MCF 10A (cell line): ENCODE measurements at regions of chr19 and their contacts with region 1.

Region 1: DNA sequence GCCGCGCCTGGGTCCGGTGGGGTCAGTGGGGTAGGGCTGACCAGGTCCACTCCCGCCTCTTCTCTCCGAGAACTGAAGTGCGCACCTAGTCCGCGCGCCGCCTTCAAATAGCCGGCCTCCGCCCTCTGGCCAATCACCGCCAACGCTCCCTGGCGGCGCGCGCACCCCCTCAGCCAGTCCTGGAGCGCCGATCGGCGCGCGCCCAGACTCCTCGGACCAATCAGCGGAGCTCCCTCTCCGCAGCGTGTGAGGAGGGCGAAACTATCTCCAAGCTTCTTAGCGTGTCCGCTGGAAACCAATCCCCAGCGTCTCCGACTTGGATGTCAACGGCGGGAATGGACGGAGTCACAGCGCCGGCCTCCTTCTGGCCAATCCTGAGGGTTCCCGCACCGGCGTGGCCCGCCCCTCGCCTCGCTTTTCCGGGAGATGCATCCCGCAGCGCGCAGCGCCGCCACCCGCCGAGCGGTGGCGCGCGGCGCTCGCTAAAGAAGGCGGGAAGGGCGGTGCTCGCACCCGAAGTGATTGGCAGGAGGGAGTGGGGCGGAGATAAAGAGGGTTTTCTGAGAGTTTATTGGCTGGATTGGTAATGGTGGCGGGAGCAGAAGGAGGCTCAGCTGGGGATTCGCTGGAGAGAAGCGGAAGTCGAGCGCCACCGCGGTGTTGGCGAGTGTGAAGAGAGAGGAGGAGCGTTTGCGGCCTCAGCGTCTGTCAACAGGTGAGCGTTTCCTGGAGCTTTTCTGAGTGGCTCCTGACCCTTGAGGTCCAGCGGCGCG is at the start of gene ASF1B:
- DNase-seq: peak; percentile 100
- H3K4me3 Mint-ChIP-seq: peak within 1 kb of the TSS; percentile 82
- H3K27ac Mint-ChIP-seq: peak within 1 kb of the TSS; percentile 91
- H3K4me1 Mint-ChIP-seq: peaks cover 30% of the 10 kb centered on the region
- H3K27me3 Mint-ChIP-seq: no peaks in the 10 kb centered on the region
- CTCF ChIP-seq: peak; percentile 74
- total RNA-seq, gene ASF1B: 6.5 and 7.0 TPM in 2 replicates

Region 2: GRCh38 chr19:14081325-14082093 is 55.2 kb before region 1 on chr19:
- CTCF ChIA-PET with region 1: interaction called, 4 read pairs
- POLR2A ChIA-PET with region 1: interaction called, 23 read pairs
- intact Hi-C with region 1: no loop called
- DNase-seq: peak; percentile 100
- H3K4me3 Mint-ChIP-seq: peak overlapping the region; percentile 90
- H3K27ac Mint-ChIP-seq: peak overlapping the region; percentile 96
- H3K4me1 Mint-ChIP-seq: no peaks in the 10 kb centered on the region
- H3K27me3 Mint-ChIP-seq: no peaks in the 10 kb centered on the region
- CTCF ChIP-seq: no peak

Region 3: GRCh38 chr19:14107581-14108461 is 28.9 kb before region 1 on chr19:
- CTCF ChIA-PET with region 1: no interaction called
- POLR2A ChIA-PET with region 1: no interaction called
- intact Hi-C with region 1: no loop called
- DNase-seq: no peak
- H3K4me3 Mint-ChIP-seq: no peak overlapping the region
- H3K27ac Mint-ChIP-seq: no peak overlapping the region
- H3K4me1 Mint-ChIP-seq: no peaks in the 10 kb centered on the region
- H3K27me3 Mint-ChIP-seq: no peaks in the 10 kb centered on the region
- CTCF ChIP-seq: no peak

Region 4: GRCh38 chr19:14122924-14123323 is 13.8 kb before region 1 on chr19:
- CTCF ChIA-PET with region 1: interaction called, 17 read pairs
- POLR2A ChIA-PET with region 1: interaction called, 22 read pairs
- intact Hi-C with region 1: no loop called
- DNase-seq: no peak
- H3K4me3 Mint-ChIP-seq: no peak overlapping the region
- H3K27ac Mint-ChIP-seq: no peak overlapping the region
- H3K4me1 Mint-ChIP-seq: peaks cover 11% of the 10 kb centered on the region
- H3K27me3 Mint-ChIP-seq: no peaks in the 10 kb centered on the region
- CTCF ChIP-seq: no peak

Region 5: DNA sequence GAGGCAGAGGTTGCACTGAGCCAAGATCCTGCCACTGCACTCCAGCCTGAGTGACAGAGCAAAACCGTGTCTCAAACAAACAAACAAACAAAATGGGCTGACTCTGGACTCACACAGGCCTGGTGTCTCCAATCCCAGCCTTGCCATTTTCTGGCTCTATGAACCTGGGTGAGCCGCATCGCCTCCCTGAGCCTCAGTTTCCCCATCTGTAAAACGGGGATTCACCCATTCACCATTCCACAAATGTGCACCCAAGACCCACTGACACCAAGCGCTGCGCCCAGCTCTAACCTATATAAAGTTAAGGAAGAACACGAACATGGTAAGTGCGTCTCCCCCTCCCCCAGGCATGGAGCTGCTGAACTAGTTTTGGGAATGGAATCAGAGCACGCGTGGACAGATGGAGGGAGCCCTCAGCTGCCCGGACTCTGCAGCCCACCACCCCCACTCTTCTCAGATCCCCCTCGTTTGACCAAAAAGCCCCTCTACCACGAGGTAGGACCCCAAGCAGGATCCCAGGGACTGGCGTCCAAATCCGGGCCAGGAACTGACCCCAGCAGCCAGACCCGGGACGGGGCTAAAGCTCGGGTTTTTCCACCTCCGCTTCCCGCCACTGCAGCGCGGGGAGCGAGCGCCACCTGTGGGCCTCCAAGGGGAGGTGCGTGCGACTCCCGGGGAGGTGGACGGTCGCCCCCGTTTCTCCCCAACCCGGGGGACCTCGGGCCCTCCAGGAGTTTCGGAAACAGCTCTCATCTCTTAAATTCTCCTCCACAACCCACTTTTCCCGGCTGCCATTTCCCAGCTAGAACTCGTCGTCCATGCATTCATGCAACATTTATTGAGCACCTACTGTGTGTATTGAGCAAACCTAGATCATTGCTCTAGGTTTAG is 211.5 kb after region 1 on chr19:
- CTCF ChIA-PET with region 1: interaction called, 31 read pairs
- POLR2A ChIA-PET with region 1: interaction called, 10 read pairs
- intact Hi-C with region 1: loop called (anchors 1 kb)
- DNase-seq: peak; percentile 66
- H3K4me3 Mint-ChIP-seq: peak overlapping the region; percentile 43
- H3K27ac Mint-ChIP-seq: no peak overlapping the region
- H3K4me1 Mint-ChIP-seq: peaks cover under 1% of the 10 kb centered on the region
- H3K27me3 Mint-ChIP-seq: no peaks in the 10 kb centered on the region
- CTCF ChIP-seq: peak; percentile 97

Region 6: GRCh38 chr19:14419106-14419813 is 282.6 kb after region 1 on chr19 and contains the start of gene DDX39A:
- CTCF ChIA-PET with region 1: interaction called, 6 read pairs
- POLR2A ChIA-PET with region 1: interaction called, 6 read pairs
- intact Hi-C with region 1: loop called (anchors 2 kb)
- DNase-seq: peak; percentile 100
- H3K4me3 Mint-ChIP-seq: peak within 1 kb of the TSS; percentile 79
- H3K27ac Mint-ChIP-seq: peak within 1 kb of the TSS; percentile 88
- H3K4me1 Mint-ChIP-seq: peaks cover 23% of the 10 kb centered on the region
- H3K27me3 Mint-ChIP-seq: no peaks in the 10 kb centered on the region
- CTCF ChIP-seq: no peak
- total RNA-seq, gene DDX39A: 62.1 and 65.4 TPM in 2 replicates

Region 7: DNA sequence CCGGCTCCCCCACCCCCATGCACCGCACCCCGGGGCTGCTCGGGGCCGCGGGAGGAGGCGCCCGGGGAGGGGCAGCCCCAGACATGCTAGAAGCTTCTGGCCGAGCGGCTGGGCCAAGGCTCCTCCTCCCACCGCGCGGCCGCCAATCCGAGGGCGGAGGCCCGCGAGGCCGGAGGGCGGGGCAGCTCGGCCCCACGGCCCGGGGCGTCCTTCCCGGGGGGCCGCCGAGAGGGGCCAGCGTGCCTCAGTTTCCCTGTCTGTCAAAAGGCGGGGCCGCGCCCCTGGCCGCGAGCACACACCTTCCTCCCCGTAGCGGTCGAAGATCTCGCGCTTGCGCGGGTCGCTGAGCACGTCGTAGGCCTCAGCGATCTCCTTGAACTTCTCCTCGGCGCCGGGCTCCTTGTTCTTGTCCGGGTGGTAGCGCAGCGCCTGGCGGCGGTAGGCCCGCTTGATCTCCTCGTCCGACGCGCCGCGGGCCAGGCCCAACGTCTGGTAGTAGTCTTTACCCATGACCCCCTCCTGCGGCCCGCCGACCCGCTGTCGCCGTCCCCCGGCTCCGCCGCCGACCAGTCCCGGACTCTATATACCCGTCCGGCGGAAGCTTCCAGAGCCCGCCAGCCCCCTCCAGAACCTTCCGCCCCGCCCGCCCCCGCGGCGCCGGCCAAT is 381.3 kb after region 1 on chr19 and contains the start of gene DNAJB1:
- CTCF ChIA-PET with region 1: interaction called, 3 read pairs
- POLR2A ChIA-PET with region 1: interaction called, 13 read pairs
- intact Hi-C with region 1: no loop called
- DNase-seq: peak; percentile 85
- H3K4me3 Mint-ChIP-seq: peak within 1 kb of the TSS; percentile 87
- H3K27ac Mint-ChIP-seq: peak within 1 kb of the TSS; percentile 97
- H3K4me1 Mint-ChIP-seq: peaks cover 23% of the 10 kb centered on the region
- H3K27me3 Mint-ChIP-seq: no peaks in the 10 kb centered on the region
- CTCF ChIP-seq: no peak
- total RNA-seq, gene DNAJB1: 71.6 and 97.4 TPM in 2 replicates